Tibial artery (tissue), 4 donors: ENCODE measurements at regions of chr6 and their contacts with region 1.

Region 1: DNA sequence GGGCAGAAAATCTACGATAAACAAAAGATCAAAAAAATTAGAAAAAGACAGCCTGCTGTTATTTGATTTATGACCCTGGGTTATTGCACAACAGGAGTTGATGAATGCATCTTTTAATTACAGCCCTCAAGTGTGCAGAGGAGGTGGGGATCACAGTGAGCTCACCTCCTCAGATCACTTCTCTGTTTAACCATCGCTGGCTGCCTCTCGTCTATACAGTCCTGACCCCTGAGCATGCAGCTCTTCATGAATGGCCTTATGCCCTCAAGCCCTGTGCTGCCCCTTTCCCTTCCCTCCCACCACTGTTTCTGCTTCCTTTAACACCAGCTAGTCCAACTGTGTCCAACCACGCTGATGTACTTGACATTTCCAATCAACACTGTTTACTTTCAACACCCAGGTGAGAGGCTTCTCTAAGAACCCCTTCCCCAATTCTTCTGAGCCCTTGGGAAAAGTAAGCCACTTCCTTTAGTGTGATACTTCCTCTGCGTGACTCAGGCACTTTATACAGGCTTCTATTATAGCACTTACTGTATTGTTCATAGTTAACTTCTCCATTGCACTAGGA is 60.6 kb upstream of the RIPOR2 start:
- DNase-seq: no peak
- H3K4me3 ChIP-seq: no peak overlapping the region
- H3K27ac ChIP-seq: no peak overlapping the region
- H3K4me1 ChIP-seq: no peaks in the 10 kb centered on the region
- H3K27me3 ChIP-seq: no peaks in the 10 kb centered on the region
- CTCF ChIP-seq: no peak

Region 2: GRCh38 chr6:24223115-24223919 is 773.0 kb before region 1 on chr6:
- intact Hi-C with region 1: no loop called
- DNase-seq: no peak
- H3K4me3 ChIP-seq: no peak overlapping the region
- H3K27ac ChIP-seq: no peak overlapping the region
- H3K4me1 ChIP-seq: no peaks in the 10 kb centered on the region
- H3K27me3 ChIP-seq: no peaks in the 10 kb centered on the region
- CTCF ChIP-seq: no peak

Region 3: GRCh38 chr6:24600903-24601302 is 395.4 kb before region 1 on chr6:
- intact Hi-C with region 1: no loop called
- DNase-seq: no peak
- H3K4me3 ChIP-seq: no peak overlapping the region
- H3K27ac ChIP-seq: no peak overlapping the region
- H3K4me1 ChIP-seq: no peaks in the 10 kb centered on the region
- H3K27me3 ChIP-seq: no peaks in the 10 kb centered on the region
- CTCF ChIP-seq: no peak

Region 4: GRCh38 chr6:24861934-24862333 is 134.4 kb before region 1 on chr6:
- intact Hi-C with region 1: loop called (anchors 5 kb)
- DNase-seq: no peak
- H3K4me3 ChIP-seq: no peak overlapping the region
- H3K27ac ChIP-seq: no peak overlapping the region
- H3K4me1 ChIP-seq: no peaks in the 10 kb centered on the region
- H3K27me3 ChIP-seq: no peaks in the 10 kb centered on the region
- CTCF ChIP-seq: no peak

Region 5: DNA sequence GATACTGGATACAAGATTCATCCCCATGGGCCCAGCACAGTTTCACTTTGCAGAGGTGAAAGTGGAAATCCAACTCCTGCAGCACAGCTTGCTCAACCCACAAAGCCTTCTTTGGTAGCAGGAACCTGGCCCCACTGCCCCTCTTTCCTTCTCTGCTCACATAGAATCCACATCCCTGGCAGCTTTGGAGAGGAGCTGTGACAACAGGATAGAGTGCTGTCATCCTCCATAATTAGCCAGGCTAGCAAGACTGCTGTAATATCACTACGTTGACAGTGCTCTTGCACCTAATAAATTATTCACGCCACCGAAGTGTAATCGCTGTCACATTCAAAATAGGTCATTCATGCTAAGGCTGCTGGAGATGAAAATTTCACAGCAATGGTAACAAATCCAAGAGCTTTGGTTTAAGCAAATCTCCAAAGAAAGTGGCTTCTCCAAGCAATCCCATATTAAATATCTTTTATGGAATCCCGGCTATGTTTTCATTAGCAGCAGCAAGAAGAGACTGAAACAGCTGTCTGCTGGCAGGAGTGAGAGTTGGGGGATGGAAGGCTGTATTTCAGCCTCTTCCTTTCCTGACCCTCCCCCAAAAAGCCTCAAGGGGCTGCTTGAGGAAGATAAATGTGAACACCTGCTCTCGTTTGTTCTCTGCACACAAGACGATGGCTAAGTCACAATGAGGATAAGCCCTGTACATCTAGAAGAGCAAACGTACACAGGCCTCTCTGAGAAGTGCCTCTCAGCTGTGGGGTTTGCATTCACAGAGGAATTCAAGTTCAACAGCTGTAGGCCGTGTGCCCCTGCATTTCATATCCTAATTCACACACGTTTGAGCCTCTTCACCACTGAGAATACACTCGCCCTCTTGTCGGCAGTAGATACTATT is 77.1 kb before region 1 on chr6:
- intact Hi-C with region 1: no loop called
- DNase-seq: no peak
- H3K4me3 ChIP-seq: no peak overlapping the region
- H3K27ac ChIP-seq: no peak overlapping the region
- H3K4me1 ChIP-seq: peaks cover 0 to 6% (median 0%) of the 10 kb centered on the region in 4 donors
- H3K27me3 ChIP-seq: peaks cover 0 to 9% of the 10 kb centered on the region in 2 donors
- CTCF ChIP-seq: no peak